Activated CD4-positive, alpha-beta memory T cell treated with anti-CD3 and anti-CD28 coated beads for 36 hours (primary cell): ENCODE measurements at regions of chr18 and their contacts with region 1.

Region 1: GRCh38 chr18:23703057-23703986 is 14.1 kb downstream of the LAMA3 start:
- DNase-seq: peak; percentile 21
- H3K4me3 Mint-ChIP-seq: no peak overlapping the region
- H3K27ac Mint-ChIP-seq: no peak overlapping the region
- H3K4me1 Mint-ChIP-seq: no peaks in the 10 kb centered on the region
- H3K27me3 Mint-ChIP-seq: peaks cover 9% of the 10 kb centered on the region

Region 2: DNA sequence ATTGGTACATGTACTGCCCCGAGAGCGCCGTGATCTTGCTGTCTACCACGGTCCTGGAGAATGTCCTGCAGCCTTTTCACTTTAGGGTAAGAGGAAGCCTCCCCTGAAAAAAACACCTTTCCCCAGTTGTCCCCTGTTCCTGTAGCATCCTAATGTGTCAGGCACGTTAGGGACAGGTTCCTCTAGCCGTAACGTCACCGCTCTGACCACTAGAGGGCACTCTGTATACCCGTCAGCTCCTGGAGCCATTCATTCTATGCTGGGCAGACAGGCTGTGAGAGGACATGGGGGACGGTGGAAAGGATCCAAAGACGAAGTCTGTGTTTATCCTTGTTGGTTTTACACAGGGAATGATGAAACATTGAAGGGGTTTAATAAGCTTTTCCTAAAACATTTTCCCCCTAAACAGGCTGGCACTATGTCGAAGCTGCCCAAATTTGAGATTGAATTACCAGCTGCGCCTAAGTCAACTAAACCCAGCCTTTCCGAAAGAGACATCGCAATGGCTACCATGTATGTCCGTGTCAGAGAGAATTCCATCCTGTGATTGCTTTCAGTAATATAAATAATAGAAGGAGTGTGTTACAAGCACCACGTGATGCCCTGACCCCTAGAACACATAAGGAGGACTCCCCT is 187.3 kb before region 1 on chr18:
- CTCF ChIA-PET with region 1: interaction called, 24 read pairs
- POLR2A ChIA-PET with region 1: no interaction called
- intact Hi-C with region 1: no loop called
- DNase-seq: peak; percentile 83
- H3K4me3 Mint-ChIP-seq: no peak overlapping the region
- H3K27ac Mint-ChIP-seq: peak overlapping the region; percentile 30
- H3K4me1 Mint-ChIP-seq: peaks cover 15% of the 10 kb centered on the region
- H3K27me3 Mint-ChIP-seq: no peaks in the 10 kb centered on the region

Region 3: GRCh38 chr18:23629444-23629946 is 73.8 kb before region 1 on chr18:
- CTCF ChIA-PET with region 1: interaction called, 94 read pairs
- POLR2A ChIA-PET with region 1: no interaction called
- intact Hi-C with region 1: no loop called
- DNase-seq: no peak
- H3K4me3 Mint-ChIP-seq: no peak overlapping the region
- H3K27ac Mint-ChIP-seq: no peak overlapping the region
- H3K4me1 Mint-ChIP-seq: peaks cover 8% of the 10 kb centered on the region
- H3K27me3 Mint-ChIP-seq: peaks cover 3% of the 10 kb centered on the region

Region 4: GRCh38 chr18:23689031-23689615 is 14.2 kb before region 1 on chr18 and contains the start of gene LAMA3:
- CTCF ChIA-PET with region 1: interaction called, 10 read pairs
- POLR2A ChIA-PET with region 1: no interaction called
- intact Hi-C with region 1: no loop called
- DNase-seq: peak; percentile 41
- H3K4me3 Mint-ChIP-seq: peak within 1 kb of the TSS; percentile 40
- H3K27ac Mint-ChIP-seq: no peak within 1 kb of the TSS
- H3K4me1 Mint-ChIP-seq: peaks cover 6% of the 10 kb centered on the region
- H3K27me3 Mint-ChIP-seq: peaks cover 36% of the 10 kb centered on the region
- total RNA-seq, gene LAMA3: 0.07 TPM in 1 of 2 experiments, not detected in the other

Region 5: DNA sequence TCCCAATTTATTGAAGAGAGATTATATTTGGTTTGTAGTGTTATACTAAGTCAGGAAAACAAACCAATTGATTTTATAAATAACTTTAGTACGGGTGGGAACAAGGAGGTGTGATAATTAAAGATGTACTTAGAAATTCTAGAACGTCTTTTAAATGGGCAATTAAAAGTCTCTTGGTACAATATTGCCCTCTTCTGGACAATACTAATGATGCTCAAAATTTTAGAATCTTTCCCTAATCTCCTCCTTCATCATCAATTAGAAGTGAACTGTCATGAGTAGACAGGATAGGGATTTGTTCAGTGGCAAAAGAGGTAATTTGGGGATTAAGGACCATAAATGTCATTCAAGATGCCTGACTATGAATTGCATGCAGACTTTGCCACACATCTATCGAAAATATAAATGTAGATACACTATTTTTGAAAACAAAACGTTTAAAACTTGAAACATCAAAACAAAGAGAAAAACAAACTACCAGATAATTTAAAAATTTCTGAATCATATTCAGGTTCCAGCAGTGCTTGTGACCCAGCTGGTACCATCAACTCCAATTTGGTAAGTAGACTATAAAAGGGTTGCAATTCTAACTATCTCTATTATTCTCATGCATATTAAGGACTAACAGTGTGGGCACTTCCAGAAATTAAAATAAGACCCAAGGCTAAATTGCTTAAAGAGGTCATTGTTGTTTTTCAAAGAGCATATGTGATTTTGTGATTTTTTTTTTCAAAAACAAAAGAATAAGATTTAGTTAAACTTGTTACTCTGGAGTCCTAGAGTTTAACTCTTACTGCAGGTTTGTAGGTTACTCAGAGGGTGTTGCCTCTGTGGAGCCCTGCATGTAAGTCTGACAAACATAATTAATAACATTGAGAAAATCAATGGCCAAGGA is 109.5 kb after region 1 on chr18:
- CTCF ChIA-PET with region 1: interaction called, 10 read pairs
- POLR2A ChIA-PET with region 1: no interaction called
- intact Hi-C with region 1: loop called (anchors 2 kb)
- DNase-seq: no peak
- H3K4me3 Mint-ChIP-seq: no peak overlapping the region
- H3K27ac Mint-ChIP-seq: no peak overlapping the region
- H3K4me1 Mint-ChIP-seq: peaks cover 6% of the 10 kb centered on the region
- H3K27me3 Mint-ChIP-seq: peaks cover 5% of the 10 kb centered on the region